Right ventricle myocardium superior (tissue), 1 donor: ENCODE measurements at regions of chr1 and their contacts with region 1.

Region 1: GRCh38 chr1:109910123-109910962 is at the start of gene CSF1:
- DNase-seq: peak; percentile 90
- ATAC-seq: peak; percentile 80
- total RNA-seq, gene CSF1: 16.0 TPM

Region 2: GRCh38 chr1:109762821-109763645 is 147.3 kb before region 1 on chr1:
- intact Hi-C with region 1: no loop called
- DNase-seq: peak; percentile 42
- ATAC-seq: no peak

Region 3: GRCh38 chr1:109788695-109789521 is 121.4 kb before region 1 on chr1:
- intact Hi-C with region 1: loop called (anchors 5 kb)
- DNase-seq: no peak
- ATAC-seq: no peak

Region 4: DNA sequence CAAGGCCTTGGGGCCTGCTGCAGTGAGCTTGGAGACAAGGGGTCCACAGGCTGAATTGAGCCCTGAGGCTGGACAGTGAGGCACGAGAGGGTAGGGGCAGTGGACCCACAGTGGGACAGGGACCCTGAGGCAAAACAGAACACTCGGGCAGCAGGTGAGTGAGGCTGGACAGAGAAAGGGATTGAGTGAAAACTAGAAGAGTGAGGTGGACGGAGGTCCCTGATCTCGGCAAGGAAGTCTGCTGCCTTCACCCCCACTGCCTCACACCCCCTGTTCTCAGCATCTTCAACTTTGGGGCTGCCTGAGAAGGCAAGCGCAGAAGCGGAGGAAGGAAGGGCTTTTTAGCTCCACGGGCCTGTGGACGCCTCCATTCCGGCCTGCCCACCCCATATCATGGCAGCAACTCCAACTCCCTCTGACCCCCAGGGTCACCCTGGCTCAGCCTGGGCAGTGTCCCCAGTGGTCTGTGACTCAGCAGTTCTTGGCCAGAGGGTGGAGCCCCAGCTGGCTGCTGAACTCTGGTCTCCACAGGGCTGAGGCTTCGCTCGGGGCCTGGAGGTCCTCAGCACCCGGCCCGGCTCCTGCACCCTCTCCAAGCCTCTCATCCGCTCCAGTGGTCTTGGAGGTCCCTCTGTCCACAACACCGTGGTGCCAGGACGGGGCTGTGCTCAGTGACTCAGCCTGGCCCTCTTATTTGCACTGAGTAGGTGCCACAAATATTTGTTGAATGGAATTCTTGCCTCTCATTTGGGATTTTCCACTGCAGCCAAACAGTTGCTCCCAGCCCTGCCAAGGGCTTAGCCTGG is 86.6 kb before region 1 on chr1:
- intact Hi-C with region 1: no loop called
- DNase-seq: peak; percentile 78
- ATAC-seq: peak; percentile 60

Region 5: GRCh38 chr1:109984456-109985275 is 74.3 kb after region 1 on chr1 and contains the start of gene AHCYL1:
- intact Hi-C with region 1: loop called (anchors 5 kb)
- DNase-seq: peak; percentile 100
- ATAC-seq: peak; percentile 96
- total RNA-seq, gene AHCYL1: 39.8 TPM